ENCODE measurements at regions of chr16 and their contacts with region 1.

Region 1: GRCh38 chr16:89241187-89242007 is 23.9 kb downstream of the ZNF778 start:
- DNase-seq: peak; percentile 83
- ATAC-seq: peak; percentile 83
- H3K4me3 Mint-ChIP-seq: peak overlapping the region; percentile 87
- H3K27ac Mint-ChIP-seq: peak overlapping the region; percentile 100
- H3K4me1 Mint-ChIP-seq: peaks cover 14% of the 10 kb centered on the region
- H3K27me3 Mint-ChIP-seq: no peaks in the 10 kb centered on the region

Region 2: GRCh38 chr16:89093602-89094251 is 147.7 kb before region 1 on chr16 and contains the start of gene ACSF3:
- CTCF ChIA-PET with region 1: no interaction called
- POLR2A ChIA-PET with region 1: no interaction called
- intact Hi-C with region 1: loop called in 1 of 2 experiments (anchors 1 kb)
- DNase-seq: peak; percentile 78
- ATAC-seq: peak; percentile 35
- H3K4me3 Mint-ChIP-seq: peak within 1 kb of the TSS; percentile 98
- H3K27ac Mint-ChIP-seq: peak within 1 kb of the TSS; percentile 95
- H3K4me1 Mint-ChIP-seq: peaks cover 45% of the 10 kb centered on the region
- H3K27me3 Mint-ChIP-seq: no peaks in the 10 kb centered on the region
- total RNA-seq, gene ACSF3: 39.7 to 41.7 TPM

Region 3: GRCh38 chr16:89115216-89115861 is 126.1 kb before region 1 on chr16:
- CTCF ChIA-PET with region 1: no interaction called
- POLR2A ChIA-PET with region 1: no interaction called
- intact Hi-C with region 1: loop called in 1 of 2 experiments (anchors 1 kb)
- DNase-seq: peak; percentile 90
- ATAC-seq: peak; percentile 86
- H3K4me3 Mint-ChIP-seq: peak overlapping the region; percentile 74
- H3K27ac Mint-ChIP-seq: peak overlapping the region; percentile 89
- H3K4me1 Mint-ChIP-seq: peaks cover 58% of the 10 kb centered on the region
- H3K27me3 Mint-ChIP-seq: no peaks in the 10 kb centered on the region

Region 4: GRCh38 chr16:89201439-89202377 is 39.7 kb before region 1 on chr16:
- CTCF ChIA-PET with region 1: no interaction called
- POLR2A ChIA-PET with region 1: no interaction called
- intact Hi-C with region 1: loop called in 1 of 2 experiments (anchors 5 kb)
- DNase-seq: peak; percentile 94
- ATAC-seq: peak; percentile 97
- H3K4me3 Mint-ChIP-seq: peak overlapping the region; percentile 44
- H3K27ac Mint-ChIP-seq: no peak overlapping the region
- H3K4me1 Mint-ChIP-seq: peaks cover 13% of the 10 kb centered on the region
- H3K27me3 Mint-ChIP-seq: peaks cover 32% of the 10 kb centered on the region

Region 5: GRCh38 chr16:89289428-89290395 is 48.3 kb after region 1 on chr16:
- CTCF ChIA-PET with region 1: interaction called, 3 read pairs
- POLR2A ChIA-PET with region 1: no interaction called
- intact Hi-C with region 1: loop called in 1 of 2 experiments (anchors 2 kb)
- DNase-seq: peak; percentile 86
- ATAC-seq: peak; percentile 97
- H3K4me3 Mint-ChIP-seq: no peak overlapping the region
- H3K27ac Mint-ChIP-seq: no peak overlapping the region
- H3K4me1 Mint-ChIP-seq: peaks cover 3% of the 10 kb centered on the region
- H3K27me3 Mint-ChIP-seq: no peaks in the 10 kb centered on the region

Region 6: GRCh38 chr16:89560378-89561141 is 319.2 kb after region 1 on chr16 and contains the start of gene RPL13:
- CTCF ChIA-PET with region 1: no interaction called
- POLR2A ChIA-PET with region 1: no interaction called
- intact Hi-C with region 1: loop called (anchors 1 to 2 kb)
- DNase-seq: peak; percentile 97
- ATAC-seq: peak; percentile 90
- H3K4me3 Mint-ChIP-seq: peak within 1 kb of the TSS; percentile 95
- H3K27ac Mint-ChIP-seq: peak within 1 kb of the TSS; percentile 99
- H3K4me1 Mint-ChIP-seq: peaks cover 46% of the 10 kb centered on the region
- H3K27me3 Mint-ChIP-seq: no peaks in the 10 kb centered on the region
- total RNA-seq, gene RPL13: 2,518 to 3,038 TPM